ENCODE measurements at regions of chr22 and their contacts with region 1.

Region 1: GRCh38 chr22:30386960-30387827 is at the start of gene RNF215:
- DNase-seq: peak; percentile 79
- H3K4me3 Mint-ChIP-seq: peak within 1 kb of the TSS; percentile 84
- H3K27ac Mint-ChIP-seq: peak within 1 kb of the TSS; percentile 56
- H3K4me1 Mint-ChIP-seq: peaks cover 25% of the 10 kb centered on the region
- H3K27me3 Mint-ChIP-seq: no peaks in the 10 kb centered on the region
- total RNA-seq, gene RNF215: 10.3 and 13.2 TPM in 2 replicates

Region 2: GRCh38 chr22:30062950-30063349 is 324.2 kb before region 1 on chr22:
- intact Hi-C with region 1: no loop called
- DNase-seq: no peak
- H3K4me3 Mint-ChIP-seq: no peak overlapping the region
- H3K27ac Mint-ChIP-seq: no peak overlapping the region
- H3K4me1 Mint-ChIP-seq: no peaks in the 10 kb centered on the region
- H3K27me3 Mint-ChIP-seq: peaks cover 7% of the 10 kb centered on the region

Region 3: DNA sequence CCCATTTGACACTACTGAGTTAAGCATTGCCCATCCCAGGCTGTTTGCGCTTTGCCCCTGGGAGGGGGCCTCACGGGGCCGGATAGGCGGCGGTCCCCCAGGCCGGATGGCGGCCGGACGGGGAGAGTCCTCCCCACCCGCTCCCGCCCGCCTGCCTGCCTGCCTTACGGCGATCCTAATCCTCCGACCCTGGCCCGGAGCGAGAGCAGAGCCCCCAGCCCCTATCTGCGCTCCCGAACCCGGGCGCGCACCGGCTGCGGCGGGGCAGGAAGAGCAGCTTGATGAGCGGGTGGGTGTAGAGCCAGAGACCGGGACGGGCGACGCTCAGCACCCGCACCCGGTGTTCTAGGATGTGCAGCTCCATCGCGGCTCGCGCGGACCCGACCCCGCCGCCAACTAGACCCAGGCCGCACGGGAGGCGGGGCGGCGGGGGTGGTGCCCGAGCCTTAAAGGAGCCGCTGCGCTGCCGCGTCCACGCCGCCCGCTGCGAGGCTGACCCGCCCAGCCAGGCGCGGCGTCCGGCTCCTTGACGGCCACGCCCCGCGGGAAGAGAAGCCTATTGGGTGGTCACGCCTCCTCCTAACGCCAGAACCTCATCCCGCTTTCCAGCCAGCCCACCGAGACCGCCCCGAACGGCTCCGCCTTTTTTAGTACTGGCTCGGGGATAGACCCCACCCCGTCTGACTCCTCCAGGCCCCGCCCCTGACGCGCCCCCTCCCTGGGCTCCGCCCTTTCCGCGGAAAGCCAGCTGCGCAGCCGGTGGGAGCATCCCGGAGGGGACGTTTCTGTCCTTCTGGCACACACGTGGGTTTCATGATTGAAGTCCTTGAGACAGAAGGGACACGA is 97.8 kb before region 1 on chr22 and contains the start of gene CASTOR1:
- intact Hi-C with region 1: loop called (anchors 1 kb)
- DNase-seq: peak; percentile 90
- H3K4me3 Mint-ChIP-seq: peak within 1 kb of the TSS; percentile 87
- H3K27ac Mint-ChIP-seq: peak within 1 kb of the TSS; percentile 81
- H3K4me1 Mint-ChIP-seq: peaks cover 56% of the 10 kb centered on the region
- H3K27me3 Mint-ChIP-seq: no peaks in the 10 kb centered on the region
- total RNA-seq, gene CASTOR1: 5.6 and 8.8 TPM in 2 replicates

Region 4: GRCh38 chr22:30326706-30327362 is 60.4 kb before region 1 on chr22 and contains the start of gene TBC1D10A:
- intact Hi-C with region 1: loop called (anchors 1 kb)
- DNase-seq: peak; percentile 90
- H3K4me3 Mint-ChIP-seq: peak within 1 kb of the TSS; percentile 89
- H3K27ac Mint-ChIP-seq: peak within 1 kb of the TSS; percentile 60
- H3K4me1 Mint-ChIP-seq: peaks cover 48% of the 10 kb centered on the region
- H3K27me3 Mint-ChIP-seq: no peaks in the 10 kb centered on the region
- total RNA-seq, gene TBC1D10A: 17.3 and 24.9 TPM in 2 replicates

Region 5: DNA sequence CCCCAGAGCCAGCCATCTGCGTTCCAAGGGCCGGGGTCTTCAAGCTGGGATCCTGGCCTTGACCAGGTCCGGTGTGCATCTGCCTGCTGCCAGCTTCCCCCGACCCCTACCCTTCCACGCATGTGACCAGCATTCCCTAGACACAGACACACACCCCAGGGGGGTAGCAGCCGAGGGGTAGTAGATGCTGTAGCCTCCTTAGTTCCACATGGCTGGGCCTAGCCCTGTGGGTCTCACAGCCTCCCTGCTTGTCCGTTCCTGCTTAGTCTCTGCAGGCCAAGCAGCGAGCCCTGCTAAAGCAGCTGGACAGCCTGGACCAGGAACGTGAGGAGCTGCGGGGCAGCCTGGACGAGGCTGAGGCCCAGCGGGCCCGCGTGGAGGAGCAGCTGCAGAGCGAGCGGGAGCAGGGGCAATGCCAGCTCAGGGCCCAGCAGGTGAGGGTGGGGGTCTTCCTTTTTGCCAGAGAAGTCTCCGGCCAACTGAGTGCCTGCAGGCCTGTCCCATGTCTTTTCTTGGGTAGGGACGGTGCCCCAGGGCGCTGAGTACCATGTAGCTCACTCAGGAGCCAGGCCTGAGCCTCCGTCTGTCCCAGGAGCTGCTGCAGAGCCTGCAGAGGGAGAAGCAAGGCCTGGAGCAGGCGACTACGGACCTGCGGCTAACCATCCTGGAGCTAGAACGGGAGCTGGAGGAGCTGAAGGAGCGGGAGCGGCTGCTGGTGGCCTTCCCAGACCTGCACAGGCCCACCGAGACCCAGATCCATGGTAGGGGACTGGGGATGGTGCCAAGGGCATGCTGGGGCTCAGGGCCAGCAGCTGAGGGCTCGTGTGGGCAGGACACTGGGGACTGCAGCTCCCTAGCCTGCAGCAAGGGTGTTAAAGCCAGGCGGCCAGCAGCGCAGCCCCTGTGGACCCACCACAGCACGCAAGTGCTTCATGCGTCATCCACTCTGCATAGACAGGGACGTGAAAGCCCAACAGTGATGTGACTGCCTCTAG is 13.6 kb before region 1 on chr22:
- intact Hi-C with region 1: no loop called
- DNase-seq: no peak
- H3K4me3 Mint-ChIP-seq: no peak overlapping the region
- H3K27ac Mint-ChIP-seq: no peak overlapping the region
- H3K4me1 Mint-ChIP-seq: no peaks in the 10 kb centered on the region
- H3K27me3 Mint-ChIP-seq: no peaks in the 10 kb centered on the region

Region 6: GRCh38 chr22:30485362-30485988 is 98.3 kb after region 1 on chr22:
- intact Hi-C with region 1: loop called (anchors 1 kb)
- DNase-seq: peak; percentile 70
- H3K4me3 Mint-ChIP-seq: no peak overlapping the region
- H3K27ac Mint-ChIP-seq: no peak overlapping the region
- H3K4me1 Mint-ChIP-seq: no peaks in the 10 kb centered on the region
- H3K27me3 Mint-ChIP-seq: peaks cover 4% of the 10 kb centered on the region

Measured in activated T-helper 1 cell treated with anti-CD3 and anti-CD28 coated beads, Interleukin-12 subunit alpha, Interleukin-12 subunit beta, Interleukin-2, Interleukin-4 antibody, amounts not matched to agents 30 ng/mL and 10 ng/mL and 1 ng/mL, durations not matched to agents 14 hours and 24 hours and 36 hours (primary cell).